ENCODE measurements at regions of chr17 and their contacts with region 1.

Region 1: DNA sequence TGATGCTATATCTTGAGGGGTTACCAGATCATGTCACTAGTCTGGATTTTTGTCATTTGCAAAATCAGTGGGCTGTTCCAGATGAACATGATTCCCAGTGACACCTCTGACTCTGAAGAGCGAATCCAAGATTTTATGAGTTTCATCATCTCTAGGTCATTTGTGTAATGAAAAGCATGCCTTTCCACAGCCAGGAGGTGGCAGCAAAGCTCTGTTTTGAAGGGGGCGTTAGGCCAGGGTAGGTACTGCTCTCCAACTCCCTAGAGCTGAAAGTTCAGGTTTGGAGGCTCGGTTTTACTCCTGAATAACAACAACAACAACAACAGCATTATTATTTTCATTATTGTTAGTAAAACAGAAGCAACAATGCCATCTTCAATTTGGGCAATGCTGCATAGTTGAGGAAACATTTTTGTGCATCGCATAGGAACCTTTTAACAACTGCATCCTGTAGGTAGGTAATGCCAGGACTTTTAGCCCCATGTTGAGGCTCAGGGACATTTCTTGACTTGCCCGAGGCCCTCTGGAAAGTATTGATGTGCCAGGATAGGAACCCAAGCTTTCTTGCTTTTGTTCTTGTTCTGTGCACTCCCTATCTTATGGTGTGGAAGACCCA is 77.0 kb downstream of the MYH13 start:
- DNase-seq: peak; percentile 9
- H3K4me3 ChIP-seq: no peak overlapping the region
- H3K27ac ChIP-seq: no peak overlapping the region
- H3K4me1 ChIP-seq: peaks cover 14% of the 10 kb centered on the region
- H3K27me3 ChIP-seq: no peaks in the 10 kb centered on the region
- CTCF ChIP-seq: peak; percentile 76 to 89 (median 79)

Region 2: DNA sequence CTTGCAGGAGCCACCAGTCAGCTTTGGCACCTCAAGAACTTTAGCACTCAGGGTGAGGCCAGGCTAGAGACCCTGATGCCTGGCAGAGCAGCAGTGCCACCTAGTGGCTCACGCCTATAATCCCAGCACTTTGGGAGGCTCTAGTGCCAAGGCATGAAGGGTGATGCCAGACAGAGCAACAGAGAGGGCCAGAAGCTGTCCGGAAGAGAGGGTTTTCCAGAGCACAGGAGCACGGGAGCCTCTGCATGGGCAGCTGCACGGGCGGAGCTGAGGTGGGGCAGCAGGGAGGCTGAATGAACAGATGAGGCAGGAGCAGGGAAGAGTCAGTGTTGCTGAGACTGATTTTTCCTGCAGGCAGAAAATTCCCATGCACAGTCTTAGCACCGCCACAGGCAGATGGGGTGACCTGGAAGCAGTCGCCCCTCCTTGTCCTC is 322.4 kb after region 1 on chr17:
- dilution Hi-C with region 1: loop called (anchors 25 kb)
- DNase-seq: peak; percentile 55
- H3K4me3 ChIP-seq: no peak overlapping the region
- H3K27ac ChIP-seq: peak overlapping the region; percentile 4
- H3K4me1 ChIP-seq: peaks cover 37% of the 10 kb centered on the region
- H3K27me3 ChIP-seq: no peaks in the 10 kb centered on the region
- CTCF ChIP-seq: peak; percentile 90 to 97 (median 96)